ENCODE measurements at regions of chr14 and their contacts with region 1.

Region 1: DNA sequence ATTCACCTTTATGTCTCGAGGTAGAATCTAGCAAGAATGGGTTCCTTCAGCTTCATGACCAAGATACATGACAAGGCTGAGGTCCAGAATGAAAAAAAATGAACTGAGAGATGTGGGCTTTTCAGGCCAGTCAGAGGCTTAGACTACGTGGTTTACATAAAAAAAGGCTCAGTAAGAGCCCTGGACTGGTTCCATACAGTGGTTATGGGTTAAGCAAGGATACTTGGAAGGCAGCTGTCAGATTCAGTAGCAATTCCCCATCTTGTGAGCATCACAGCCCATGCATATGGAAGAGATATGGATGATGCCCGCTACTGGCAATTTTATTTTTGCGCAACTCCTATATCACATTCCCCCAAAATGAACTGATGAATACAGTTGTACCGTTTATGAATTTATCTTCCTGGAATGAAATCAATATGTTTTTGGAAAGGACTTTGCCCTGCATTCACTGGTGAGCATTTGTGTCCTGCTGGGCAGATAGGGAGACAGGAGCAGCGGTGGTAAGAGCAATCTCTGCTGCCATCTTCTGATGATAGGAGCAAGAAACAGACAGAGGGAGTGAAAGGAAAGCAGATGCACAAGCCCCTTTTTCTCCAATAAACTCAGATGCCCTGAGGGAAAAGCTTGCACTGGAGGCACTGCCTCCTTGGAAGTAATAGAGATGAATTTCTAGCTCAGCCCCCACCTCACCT is 280.4 kb downstream of the GALC start:
- DNase-seq: no peak
- H3K4me3 ChIP-seq: no peak overlapping the region
- H3K27ac ChIP-seq: no peak overlapping the region
- H3K4me1 ChIP-seq: no peaks in the 10 kb centered on the region
- H3K27me3 ChIP-seq: no peaks in the 10 kb centered on the region
- CTCF ChIP-seq: peak in 2 of 3 experiments; percentile 27 to 37; a peak in 2 of 4 replicates
- EP300 ChIP-seq: no peak
- POLR2A ChIP-seq: no peak
- RAD21 ChIP-seq: peak; percentile 59 to 63

Region 2: GRCh38 chr14:87725318-87725717 is 12.8 kb after region 1 on chr14:
- CTCF ChIA-PET with region 1: interaction called, 21 read pairs
- POLR2A ChIA-PET with region 1: interaction called, 3 read pairs
- DNase-seq: no peak
- H3K4me3 ChIP-seq: no peak overlapping the region
- H3K27ac ChIP-seq: no peak overlapping the region
- H3K4me1 ChIP-seq: no peaks in the 10 kb centered on the region
- H3K27me3 ChIP-seq: no peaks in the 10 kb centered on the region
- CTCF ChIP-seq: no peak
- EP300 ChIP-seq: no peak
- POLR2A ChIP-seq: no peak
- RAD21 ChIP-seq: no peak

Measured in H1 (cell line).